ENCODE measurements at regions of chr12 and their contacts with region 1.

Region 1: DNA sequence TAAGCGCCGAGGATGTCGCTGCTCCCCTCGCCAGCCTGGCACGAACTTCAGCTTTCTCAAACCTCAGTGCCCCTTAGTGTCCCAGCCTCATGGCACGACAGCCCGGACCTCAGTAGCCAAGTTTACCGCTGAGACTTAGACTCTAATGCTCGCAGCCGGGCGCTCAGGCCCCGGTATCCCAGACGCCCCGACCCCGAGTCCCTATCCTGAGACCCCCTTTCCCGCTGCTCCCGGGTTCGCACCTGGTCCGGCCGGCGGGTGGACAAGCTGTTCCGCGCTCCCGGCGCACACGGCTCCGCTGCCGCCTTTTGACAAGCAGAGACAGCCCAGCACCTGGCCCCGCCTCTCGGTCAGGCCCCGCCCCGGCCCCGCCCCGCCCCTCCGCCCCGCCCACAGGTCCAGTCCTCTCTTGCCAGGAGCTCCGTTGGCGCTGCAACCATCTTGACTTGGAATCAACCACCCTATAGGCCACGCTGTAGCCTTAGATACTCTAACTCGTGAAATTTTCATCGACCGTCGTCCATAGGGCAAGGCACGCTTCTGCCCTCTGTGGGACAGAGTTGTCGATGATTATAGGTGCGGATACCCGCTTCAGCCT is at the start of gene VDR:
- DNase-seq: peak; percentile 92
- H3K4me3 ChIP-seq: peak within 1 kb of the TSS; percentile 62
- H3K27ac ChIP-seq: peak within 1 kb of the TSS; percentile 88
- H3K4me1 ChIP-seq: peaks cover 10% of the 10 kb centered on the region
- H3K27me3 ChIP-seq: no peaks in the 10 kb centered on the region
- CTCF ChIP-seq: no peak
- total RNA-seq, gene VDR: 124 to 140 TPM

Region 2: GRCh38 chr12:47949441-47950308 is 44.9 kb after region 1 on chr12:
- intact Hi-C with region 1: loop called (anchors 2 kb)
- DNase-seq: peak; percentile 88
- H3K4me3 ChIP-seq: no peak overlapping the region
- H3K27ac ChIP-seq: no peak overlapping the region
- H3K4me1 ChIP-seq: peaks cover 15% of the 10 kb centered on the region
- H3K27me3 ChIP-seq: no peaks in the 10 kb centered on the region
- CTCF ChIP-seq: peak; percentile 88

Measured in colonic mucosa (tissue), 4 donors.